Activated B cell treated with CpG ODN at 0.5 μM for 24 hours (primary cell): ENCODE measurements at regions of chr17 and their contacts with region 1.

Region 1: GRCh38 chr17:45371414-45372327 is 54.9 kb upstream of the MAP3K14 start:
- DNase-seq: peak; percentile 31
- ATAC-seq: peak; percentile 45
- H3K4me3 Mint-ChIP-seq: peak overlapping the region; percentile 49
- H3K27ac Mint-ChIP-seq: no peak overlapping the region
- H3K4me1 Mint-ChIP-seq: peaks cover 18% of the 10 kb centered on the region
- H3K27me3 Mint-ChIP-seq: peaks cover 12% of the 10 kb centered on the region
- CTCF ChIP-seq: no peak

Region 2: DNA sequence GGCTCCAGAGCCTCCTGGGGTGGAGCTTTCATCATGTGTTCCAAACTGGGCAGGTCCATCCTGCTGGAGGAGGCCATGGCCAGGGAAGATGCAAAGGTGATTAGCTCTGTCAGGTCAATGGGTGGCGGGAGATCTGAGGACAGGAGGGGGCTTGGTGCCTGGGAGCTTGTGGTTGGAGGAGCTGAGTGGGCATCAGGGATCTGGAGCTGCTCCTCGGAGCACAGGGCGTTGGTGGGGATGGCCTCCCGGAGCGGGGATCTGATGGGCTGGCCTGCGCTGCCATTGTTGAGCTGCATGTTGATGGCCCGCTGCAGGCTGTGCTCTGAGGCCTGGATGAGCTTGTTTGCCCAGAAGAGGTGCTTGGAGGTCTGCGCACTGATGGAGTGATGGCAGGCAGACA is 116.3 kb before region 1 on chr17:
- CTCF ChIA-PET with region 1: interaction called, 3 read pairs
- POLR2A ChIA-PET with region 1: interaction called, 17 read pairs
- intact Hi-C with region 1: no loop called
- DNase-seq: no peak
- ATAC-seq: no peak
- H3K4me3 Mint-ChIP-seq: no peak overlapping the region
- H3K27ac Mint-ChIP-seq: no peak overlapping the region
- H3K4me1 Mint-ChIP-seq: peaks cover 1% of the 10 kb centered on the region
- H3K27me3 Mint-ChIP-seq: no peaks in the 10 kb centered on the region
- CTCF ChIP-seq: no peak